ENCODE measurements at regions of chr17 and their contacts with region 1.

Region 1: DNA sequence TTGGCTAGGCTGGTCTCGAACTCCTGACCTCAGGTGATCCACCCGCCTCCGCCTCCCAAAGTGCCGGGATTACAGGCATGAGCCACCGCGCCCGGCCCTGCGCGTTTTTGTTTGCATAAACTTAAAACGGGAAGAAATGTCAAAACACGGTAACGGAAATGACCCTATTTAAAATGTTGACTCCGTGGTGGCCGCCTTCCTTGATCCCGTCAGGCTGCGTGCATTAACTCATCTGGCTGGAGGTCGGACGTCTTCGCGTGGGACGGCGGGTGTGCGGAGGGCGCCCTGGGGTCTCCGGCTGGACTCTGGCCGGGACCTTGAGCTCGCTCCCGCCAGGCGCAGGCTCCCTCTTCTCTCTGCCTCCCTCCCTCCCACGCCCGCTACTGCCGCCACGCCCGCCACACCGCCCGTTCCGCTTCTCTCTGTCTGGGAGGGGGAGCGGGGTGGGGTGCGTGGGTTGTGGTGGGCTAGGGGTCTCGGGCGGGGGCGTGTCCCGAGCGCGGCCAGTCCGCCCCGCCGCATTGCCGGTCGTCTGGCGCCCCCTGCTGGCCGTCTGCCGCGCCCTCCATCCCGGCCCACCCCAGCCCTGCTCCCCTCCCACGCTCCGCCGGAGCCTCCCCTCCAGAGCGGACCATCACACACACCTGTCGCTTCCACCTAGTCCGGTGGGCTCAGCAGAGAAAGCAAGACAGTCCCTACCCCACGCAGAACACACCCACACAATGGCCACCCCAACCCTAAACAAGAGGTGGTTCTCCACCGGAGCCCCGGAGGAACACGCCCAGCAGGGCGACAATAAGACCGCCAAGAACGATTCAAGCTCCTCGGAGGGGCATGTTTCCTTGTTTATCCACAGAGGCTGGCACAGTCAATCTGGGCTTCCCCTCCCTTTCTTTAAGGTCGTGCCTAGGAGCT is 1.2 kb upstream of the CCDC42 start:
- DNase-seq: peak; percentile 78 to 80 (median 79)
- ATAC-seq: peak; percentile 87
- H3K4me3 ChIP-seq: peak overlapping the region; percentile 19
- H3K4me1 ChIP-seq: peaks cover 3% of the 10 kb centered on the region
- CTCF ChIP-seq: peak; percentile 76

Region 2: GRCh38 chr17:8409966-8410864 is 335.6 kb before region 1 on chr17:
- intact Hi-C with region 1: loop called in 1 of 2 experiments (anchors 10 kb)
- DNase-seq: peak; percentile 81 to 93 (median 90)
- ATAC-seq: peak; percentile 89
- H3K4me3 ChIP-seq: no peak overlapping the region
- H3K4me1 ChIP-seq: no peaks in the 10 kb centered on the region
- CTCF ChIP-seq: peak; percentile 65

Region 3: GRCh38 chr17:8572764-8573163 is 173.1 kb before region 1 on chr17:
- intact Hi-C with region 1: loop called in 1 of 2 experiments (anchors 5 kb)
- DNase-seq: no peak
- ATAC-seq: no peak
- H3K4me3 ChIP-seq: no peak overlapping the region
- H3K4me1 ChIP-seq: no peaks in the 10 kb centered on the region
- CTCF ChIP-seq: no peak

Region 4: GRCh38 chr17:8820311-8821010 is 74.6 kb after region 1 on chr17:
- intact Hi-C with region 1: no loop called
- DNase-seq: no peak
- ATAC-seq: no peak
- H3K4me3 ChIP-seq: no peak overlapping the region
- H3K4me1 ChIP-seq: no peaks in the 10 kb centered on the region
- CTCF ChIP-seq: no peak

Measured in mucosa of descending colon (tissue), 3 donors.